Activated CD8-positive, alpha-beta T cell treated with anti-CD3 and anti-CD28 coated beads for 36 hours (primary cell): ENCODE measurements at regions of chr5 and their contacts with region 1.

Region 1: DNA sequence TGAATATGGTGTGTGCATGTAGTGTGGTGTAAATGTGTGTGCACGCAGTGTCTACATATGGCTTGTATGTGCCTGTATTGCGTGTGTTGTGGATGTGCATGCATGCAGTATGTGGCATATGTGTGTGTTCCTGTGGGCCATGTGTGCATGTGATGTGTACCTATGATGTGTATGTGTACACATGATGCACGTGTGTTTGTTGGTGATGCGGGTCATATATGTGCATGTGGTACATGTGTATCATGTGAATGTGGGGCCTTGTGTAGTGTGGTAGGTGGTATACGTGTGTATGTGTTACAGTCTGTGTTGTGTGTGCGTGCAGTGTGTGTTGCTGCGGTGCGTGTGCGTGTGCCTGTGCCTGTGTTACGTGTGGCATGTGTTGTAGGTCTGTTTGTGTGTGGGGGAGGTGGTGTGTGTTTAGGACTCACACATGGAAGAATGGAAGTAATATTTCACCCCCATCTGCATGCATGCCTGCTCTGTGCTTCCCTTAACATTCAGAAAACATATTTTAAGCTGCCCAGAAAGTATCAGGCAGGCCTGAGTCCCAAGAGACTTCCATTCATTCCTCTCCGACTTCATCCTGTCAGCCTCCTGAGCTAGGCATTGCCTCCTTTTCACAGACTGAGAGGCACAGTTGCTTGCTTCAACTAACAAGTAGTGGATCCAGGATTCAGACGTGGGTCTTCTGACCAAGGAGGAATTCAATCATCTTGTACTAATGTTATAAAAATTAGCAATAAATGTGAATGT is 55.4 kb upstream of the RUFY1 start:
- DNase-seq: no peak
- ATAC-seq: no peak
- H3K4me3 Mint-ChIP-seq: no peak overlapping the region
- H3K27ac Mint-ChIP-seq: no peak overlapping the region
- H3K4me1 Mint-ChIP-seq: no peaks in the 10 kb centered on the region
- H3K27me3 Mint-ChIP-seq: peaks cover 4% of the 10 kb centered on the region
- CTCF ChIP-seq: no peak

Region 2: DNA sequence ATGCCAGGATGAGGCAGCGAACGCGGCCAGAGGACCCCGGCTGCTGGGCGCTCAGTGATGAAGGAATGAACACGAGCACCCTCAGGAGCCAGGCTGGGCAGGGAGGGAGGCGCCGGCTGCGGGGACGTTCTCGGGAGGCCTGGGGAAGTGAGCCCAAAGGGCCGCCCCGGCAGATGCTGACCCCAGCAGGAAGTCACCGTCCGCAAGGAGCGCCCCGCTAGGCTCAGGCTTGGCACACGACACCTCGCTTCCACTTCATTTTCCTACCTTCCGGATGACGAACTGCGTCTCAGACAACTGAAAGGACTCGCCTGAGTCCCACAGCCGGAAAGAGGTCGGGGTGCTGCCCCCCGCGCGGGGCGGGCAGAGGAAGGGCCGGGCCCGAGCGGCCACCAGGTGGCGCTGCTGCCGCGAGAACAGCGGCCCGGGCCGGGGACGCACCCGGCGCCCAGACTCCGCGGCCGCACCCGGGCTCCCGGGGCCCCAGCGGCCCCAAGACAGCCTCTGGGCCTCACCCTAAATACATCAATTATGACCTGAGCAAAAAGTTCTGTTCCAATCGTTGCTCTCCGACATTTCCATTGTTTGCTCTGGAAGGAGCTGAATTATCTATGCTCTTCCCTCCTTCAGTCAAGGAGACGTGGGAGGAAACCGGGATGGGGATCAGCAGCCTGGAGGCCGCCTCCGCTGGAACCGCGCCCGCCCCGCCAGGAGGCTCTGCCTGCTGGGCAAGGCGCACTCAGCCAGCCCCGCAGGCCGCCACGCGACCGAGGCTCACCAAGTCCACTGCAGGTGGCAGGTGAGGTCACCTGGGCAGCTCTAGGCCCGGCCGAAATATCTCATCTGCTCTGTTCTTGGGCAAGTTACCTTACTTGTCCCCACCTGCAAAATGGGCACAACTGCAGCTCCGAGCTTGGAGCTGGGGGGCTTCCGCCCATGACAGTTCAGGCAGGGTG is 327.8 kb before region 1 on chr5:
- CTCF ChIA-PET with region 1: interaction called, 32 read pairs
- POLR2A ChIA-PET with region 1: no interaction called
- intact Hi-C with region 1: no loop called
- DNase-seq: peak; percentile 77
- ATAC-seq: peak; percentile 95
- H3K4me3 Mint-ChIP-seq: no peak overlapping the region
- H3K27ac Mint-ChIP-seq: no peak overlapping the region
- H3K4me1 Mint-ChIP-seq: peaks cover 3% of the 10 kb centered on the region
- H3K27me3 Mint-ChIP-seq: peaks cover 6% of the 10 kb centered on the region
- CTCF ChIP-seq: peak; percentile 93

Region 3: DNA sequence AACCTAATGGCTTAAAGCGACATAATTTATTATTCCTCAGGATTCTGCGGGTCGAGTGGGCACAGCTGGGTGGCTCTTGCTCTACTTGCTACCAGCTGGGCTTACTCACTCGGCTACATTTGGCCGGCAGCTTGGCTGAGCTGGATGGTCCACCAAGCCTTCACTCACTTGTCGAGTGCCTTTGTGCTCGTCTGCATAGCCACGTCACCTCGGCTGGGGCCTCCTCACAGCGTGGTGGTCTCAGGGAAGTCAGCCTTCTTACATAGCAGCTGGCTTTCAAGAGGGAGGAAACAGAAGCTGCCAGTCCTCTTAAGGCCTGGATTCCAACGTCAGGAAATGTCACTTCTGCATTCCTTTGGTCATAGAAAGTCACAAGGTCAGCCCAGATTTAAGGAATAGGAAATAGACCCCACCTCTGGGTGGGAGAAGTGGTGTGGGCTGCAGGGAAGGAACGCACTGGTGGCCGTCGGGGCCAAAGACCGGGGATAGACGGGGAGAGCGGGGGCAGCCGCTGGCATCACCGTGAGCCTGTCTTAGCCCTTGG is 19.7 kb before region 1 on chr5:
- CTCF ChIA-PET with region 1: no interaction called
- POLR2A ChIA-PET with region 1: no interaction called
- intact Hi-C with region 1: no loop called
- DNase-seq: no peak
- ATAC-seq: no peak
- H3K4me3 Mint-ChIP-seq: no peak overlapping the region
- H3K27ac Mint-ChIP-seq: no peak overlapping the region
- H3K4me1 Mint-ChIP-seq: no peaks in the 10 kb centered on the region
- H3K27me3 Mint-ChIP-seq: peaks cover 7% of the 10 kb centered on the region
- CTCF ChIP-seq: no peak